ENCODE measurements at regions of chr12 and their contacts with region 1.

Region 1: DNA sequence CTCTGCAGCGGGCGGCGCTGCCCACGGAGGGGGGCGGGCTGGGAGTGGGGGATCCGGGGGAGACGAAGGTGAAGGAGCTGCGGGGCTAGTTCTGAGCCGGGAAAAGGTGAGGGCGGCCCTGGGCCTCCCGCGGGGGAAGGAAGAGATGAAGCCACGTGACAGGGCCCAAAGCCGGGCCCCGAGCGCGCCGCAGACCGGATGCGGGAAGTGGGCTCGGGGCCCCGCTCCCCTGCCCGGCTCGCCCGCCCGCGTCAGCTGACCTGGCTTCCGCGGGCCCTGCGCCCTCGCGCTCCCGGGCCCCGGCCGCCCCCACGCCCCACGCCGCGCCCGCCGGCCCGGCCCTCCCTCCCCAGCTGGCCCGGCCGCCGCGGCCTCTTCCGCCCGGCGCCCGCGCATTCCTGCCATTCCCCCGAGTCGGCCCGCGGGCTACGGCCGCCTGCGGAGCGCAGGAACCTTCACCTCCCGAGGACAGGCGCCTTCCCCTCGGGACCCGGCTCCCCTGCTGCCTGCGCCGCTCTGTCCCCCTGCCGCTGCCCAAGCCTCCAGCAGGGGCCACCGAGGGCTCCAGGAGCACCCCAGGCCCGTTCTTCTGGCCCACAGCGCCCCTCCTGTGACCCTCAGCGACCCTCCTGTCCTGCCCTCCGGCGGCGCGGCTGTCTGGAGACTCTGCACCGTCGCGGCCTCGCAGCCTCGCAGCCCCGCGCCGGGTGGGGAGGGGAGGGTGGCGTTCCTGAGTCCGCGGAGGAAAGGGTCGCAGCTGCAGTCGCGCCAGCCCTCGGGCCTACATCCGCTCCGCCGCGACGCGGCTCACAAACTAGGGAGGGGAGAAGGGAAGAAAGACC is 20.4 kb downstream of the NINJ2 start:
- DNase-seq: peak; percentile 97
- H3K4me3 ChIP-seq: peak overlapping the region; percentile 46 to 85 (median 62)
- H3K27ac ChIP-seq: peak overlapping the region; percentile 99 to 100 (median 99)
- H3K4me1 ChIP-seq: peaks cover 19 to 94% (median 68%) of the 10 kb centered on the region in 6 donors
- H3K27me3 ChIP-seq: no peaks in the 10 kb centered on the region
- CTCF ChIP-seq: peak in 10 of 11 experiments; percentile 19 to 70 (median 54)
- POLR2A ChIP-seq: no peak

Region 2: DNA sequence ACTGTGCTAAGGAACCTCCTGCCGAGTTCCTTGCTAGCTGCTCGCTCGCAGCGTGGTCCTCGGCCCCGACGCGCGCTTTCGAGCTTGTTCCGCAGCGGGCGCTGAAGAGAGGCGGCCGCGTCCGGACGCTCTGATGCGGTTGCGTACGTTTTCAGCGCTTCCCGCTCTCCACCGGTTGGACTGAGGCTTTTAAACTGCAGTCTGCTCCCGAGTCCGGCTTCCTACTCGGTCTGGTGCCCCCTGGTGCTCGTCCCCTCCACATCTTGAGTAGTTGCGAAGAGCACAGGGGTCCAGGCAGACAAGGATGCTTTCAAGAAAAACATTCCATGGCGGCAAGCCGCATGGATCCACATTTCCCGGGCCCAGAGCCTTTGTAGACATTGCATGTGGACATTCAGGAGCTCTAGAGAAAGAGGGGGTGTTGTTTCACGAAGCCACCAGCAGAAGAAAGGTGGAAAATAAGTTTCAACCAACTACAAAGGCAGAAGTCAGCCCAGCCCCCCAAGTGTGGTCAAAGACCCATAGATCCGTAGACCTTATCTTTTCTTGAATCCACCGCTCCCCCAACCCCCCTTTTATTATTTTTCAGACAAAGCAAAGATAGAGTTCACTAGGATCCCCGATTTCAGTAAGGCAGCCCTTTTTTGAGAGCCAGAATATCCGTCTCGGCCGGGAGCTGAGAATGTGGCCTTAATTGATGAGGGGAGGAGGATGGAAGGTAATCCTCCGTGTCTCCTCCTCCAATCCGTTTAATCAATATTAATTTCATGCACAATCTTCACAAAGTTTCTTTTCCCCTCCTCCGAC is 108.5 kb after region 1 on chr12:
- intact Hi-C with region 1: loop called (anchors 10 kb)
- DNase-seq: peak; percentile 98
- H3K4me3 ChIP-seq: peak overlapping the region; percentile 70 to 89 (median 79)
- H3K27ac ChIP-seq: peak overlapping the region; percentile 85 to 100 (median 98)
- H3K4me1 ChIP-seq: peaks cover 14 to 53% (median 42%) of the 10 kb centered on the region in 6 donors
- H3K27me3 ChIP-seq: no peaks in the 10 kb centered on the region
- CTCF ChIP-seq: peak; percentile 66 to 93 (median 84)
- POLR2A ChIP-seq: peak in 1 of 3 donors; percentile 47